ENCODE measurements at regions of chr1 and their contacts with region 1.

Region 1: DNA sequence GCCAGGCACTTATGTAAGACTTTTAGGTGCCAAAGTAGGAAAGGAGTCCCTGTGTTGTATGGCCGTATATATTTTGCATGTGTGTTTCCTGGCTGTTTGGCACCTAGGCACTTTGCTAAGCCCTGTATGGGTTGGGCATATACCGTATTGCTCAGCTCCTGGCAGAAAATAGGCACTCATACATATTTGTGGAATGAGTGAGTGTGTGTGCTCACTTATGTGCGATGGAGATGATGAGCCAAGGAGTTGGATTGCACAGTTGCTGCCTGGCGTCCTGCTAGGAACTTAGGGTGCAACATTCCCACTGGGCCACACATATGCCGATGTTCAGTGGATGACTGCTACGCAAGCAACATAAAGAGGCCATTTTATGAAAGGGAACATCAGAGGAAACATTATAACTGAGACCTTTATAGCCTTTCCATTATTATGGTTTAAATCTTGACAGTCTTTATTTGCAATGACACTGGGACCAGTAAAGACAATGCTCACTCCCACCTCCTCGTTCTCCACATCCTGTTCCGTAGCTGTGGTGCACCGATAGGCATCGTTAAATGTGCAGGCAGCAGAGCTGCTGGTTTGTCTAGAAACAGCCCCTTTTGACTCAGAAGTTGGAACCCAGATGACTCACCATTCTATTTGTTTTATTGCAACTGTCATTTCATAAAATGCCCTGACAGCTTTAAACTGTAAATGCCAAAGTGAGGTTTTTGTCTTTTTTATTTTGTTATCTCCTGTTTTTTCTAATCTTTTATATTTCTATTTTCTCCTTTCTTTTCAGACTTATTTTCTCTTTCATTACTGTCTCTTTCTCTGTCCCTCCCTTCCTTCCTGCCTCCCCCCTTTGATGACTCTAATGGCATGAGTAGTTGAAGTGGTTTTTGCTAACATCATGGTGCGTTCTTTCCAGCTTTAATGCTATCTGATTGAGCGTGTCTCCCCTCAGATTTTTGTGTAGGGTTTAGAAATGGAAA is 36.1 kb downstream of the PEX14 start:
- DNase-seq: no peak
- ATAC-seq: peak; percentile 72 to 76
- H3K4me3 ChIP-seq: no peak overlapping the region
- H3K27ac ChIP-seq: peak overlapping the region; percentile 71
- H3K4me1 ChIP-seq: peaks cover 61% of the 10 kb centered on the region
- H3K27me3 ChIP-seq: no peaks in the 10 kb centered on the region
- CTCF ChIP-seq: no peak

Region 2: GRCh38 chr1:10694633-10695627 is 184.1 kb after region 1 on chr1:
- intact Hi-C with region 1: no loop called
- DNase-seq: peak; percentile 95
- ATAC-seq: peak; percentile 75 to 89
- H3K4me3 ChIP-seq: peak overlapping the region; percentile 58
- H3K27ac ChIP-seq: peak overlapping the region; percentile 89
- H3K4me1 ChIP-seq: peaks cover 59% of the 10 kb centered on the region
- H3K27me3 ChIP-seq: no peaks in the 10 kb centered on the region
- CTCF ChIP-seq: no peak

Region 3: GRCh38 chr1:10867138-10867721 is 356.4 kb after region 1 on chr1:
- intact Hi-C with region 1: loop called (anchors 10 kb)
- DNase-seq: peak; percentile 74
- ATAC-seq: peak; percentile 91 to 92
- H3K4me3 ChIP-seq: peak overlapping the region; percentile 36
- H3K27ac ChIP-seq: no peak overlapping the region
- H3K4me1 ChIP-seq: peaks cover 16% of the 10 kb centered on the region
- H3K27me3 ChIP-seq: peaks cover 35% of the 10 kb centered on the region
- CTCF ChIP-seq: peak; percentile 68

Measured in lower lobe of right lung (tissue), 2 donors.